Activated T-helper 1 cell treated with anti-CD3 and anti-CD28 coated beads, Interleukin-12 subunit alpha, Interleukin-12 subunit beta, Interleukin-2, Interleukin-4 antibody, amounts not matched to agents 30 ng/mL and 10 ng/mL and 1 ng/mL, durations not matched to agents 14 hours and 24 hours and 36 hours (primary cell): ENCODE measurements at regions of chr18 and their contacts with region 1.

Region 1: GRCh38 chr18:59358712-59359575 is at the start of gene LMAN1:
- DNase-seq: peak; percentile 92
- H3K4me3 Mint-ChIP-seq: peak within 1 kb of the TSS; percentile 99
- H3K27ac Mint-ChIP-seq: peak within 1 kb of the TSS; percentile 100
- H3K4me1 Mint-ChIP-seq: peaks cover 27% of the 10 kb centered on the region
- H3K27me3 Mint-ChIP-seq: no peaks in the 10 kb centered on the region
- total RNA-seq, gene LMAN1: 147 and 175 TPM in 2 replicates

Region 2: DNA sequence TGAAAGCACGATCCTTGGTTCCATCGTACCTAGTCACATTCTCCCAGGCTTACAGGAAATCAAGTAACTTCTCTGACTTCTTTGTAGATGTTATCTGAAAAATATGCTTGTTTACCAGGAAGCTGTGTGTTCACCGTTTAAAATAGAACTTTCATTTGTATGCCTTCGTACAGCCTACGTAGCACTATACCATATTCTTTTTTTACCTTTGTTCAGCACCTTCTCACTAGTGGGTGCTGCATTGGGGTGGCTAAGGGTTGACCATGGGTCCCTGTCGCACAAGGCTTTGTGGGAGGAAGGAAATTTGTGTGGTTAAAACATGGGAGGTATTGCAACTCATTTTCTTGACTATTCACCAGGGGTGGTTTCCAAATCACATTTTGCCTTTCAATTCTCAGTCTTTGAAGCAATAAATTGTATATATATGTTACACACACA is 671.1 kb before region 1 on chr18:
- intact Hi-C with region 1: loop called (anchors 5 kb)
- DNase-seq: peak; percentile 68
- H3K4me3 Mint-ChIP-seq: peak overlapping the region; percentile 53
- H3K27ac Mint-ChIP-seq: peak overlapping the region; percentile 83
- H3K4me1 Mint-ChIP-seq: peaks cover 60% of the 10 kb centered on the region
- H3K27me3 Mint-ChIP-seq: no peaks in the 10 kb centered on the region

Region 3: DNA sequence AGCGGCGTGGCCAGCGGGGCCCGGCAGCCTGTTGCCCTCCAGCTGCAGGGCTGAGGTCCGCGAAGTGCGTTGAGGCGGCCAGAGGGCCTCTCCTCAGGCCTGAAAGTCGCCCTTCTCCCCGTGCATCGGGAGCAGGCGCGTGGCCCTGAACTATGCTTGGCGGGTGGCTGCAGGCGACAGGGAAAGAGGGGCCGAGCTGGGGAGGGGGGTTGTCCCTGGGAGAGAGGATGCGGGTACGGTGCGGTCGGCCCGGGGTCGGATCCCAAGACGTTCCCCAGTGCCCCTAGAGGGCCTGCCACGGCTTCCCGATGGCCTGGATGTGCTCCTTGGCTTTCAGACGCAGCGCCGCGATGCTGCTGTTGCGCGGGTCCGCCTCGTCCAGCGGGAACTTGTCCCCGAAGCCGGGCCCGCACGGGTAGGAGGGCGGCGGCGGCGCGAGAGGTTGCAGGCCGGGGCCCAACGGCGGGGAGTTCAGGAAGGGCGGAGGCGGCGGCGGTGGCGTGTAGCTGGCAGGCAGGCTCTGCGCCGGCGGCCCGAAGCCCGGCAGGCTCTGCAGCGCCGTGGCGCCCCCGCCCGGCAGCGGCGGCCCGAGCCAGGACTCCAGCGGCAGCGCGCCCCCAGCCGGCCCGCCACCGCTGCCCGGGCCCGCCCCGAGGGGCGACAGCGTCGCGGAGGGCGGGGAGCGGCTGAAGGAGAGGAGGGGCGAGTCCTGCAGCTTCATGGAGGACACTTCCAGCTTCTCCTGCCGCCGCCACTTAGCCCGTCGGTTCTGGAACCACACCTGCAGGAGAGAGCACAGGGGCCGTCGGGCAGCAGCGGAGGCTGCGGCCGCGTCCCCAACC is 90.0 kb before region 1 on chr18:
- intact Hi-C with region 1: loop called (anchors 2 kb)
- DNase-seq: peak; percentile 14
- H3K4me3 Mint-ChIP-seq: peak overlapping the region; percentile 49
- H3K27ac Mint-ChIP-seq: no peak overlapping the region
- H3K4me1 Mint-ChIP-seq: peaks cover 13% of the 10 kb centered on the region
- H3K27me3 Mint-ChIP-seq: peaks cover 74% of the 10 kb centered on the region

Region 4: GRCh38 chr18:59340817-59341216 is 18.1 kb before region 1 on chr18:
- intact Hi-C with region 1: loop called (anchors 1 kb)
- DNase-seq: no peak
- H3K4me3 Mint-ChIP-seq: peak overlapping the region; percentile 56
- H3K27ac Mint-ChIP-seq: peak overlapping the region; percentile 80
- H3K4me1 Mint-ChIP-seq: peaks cover 60% of the 10 kb centered on the region
- H3K27me3 Mint-ChIP-seq: no peaks in the 10 kb centered on the region

Region 5: GRCh38 chr18:59484837-59485328 is 125.9 kb after region 1 on chr18:
- intact Hi-C with region 1: no loop called
- DNase-seq: no peak
- H3K4me3 Mint-ChIP-seq: no peak overlapping the region
- H3K27ac Mint-ChIP-seq: no peak overlapping the region
- H3K4me1 Mint-ChIP-seq: no peaks in the 10 kb centered on the region
- H3K27me3 Mint-ChIP-seq: peaks cover 4% of the 10 kb centered on the region

Region 6: DNA sequence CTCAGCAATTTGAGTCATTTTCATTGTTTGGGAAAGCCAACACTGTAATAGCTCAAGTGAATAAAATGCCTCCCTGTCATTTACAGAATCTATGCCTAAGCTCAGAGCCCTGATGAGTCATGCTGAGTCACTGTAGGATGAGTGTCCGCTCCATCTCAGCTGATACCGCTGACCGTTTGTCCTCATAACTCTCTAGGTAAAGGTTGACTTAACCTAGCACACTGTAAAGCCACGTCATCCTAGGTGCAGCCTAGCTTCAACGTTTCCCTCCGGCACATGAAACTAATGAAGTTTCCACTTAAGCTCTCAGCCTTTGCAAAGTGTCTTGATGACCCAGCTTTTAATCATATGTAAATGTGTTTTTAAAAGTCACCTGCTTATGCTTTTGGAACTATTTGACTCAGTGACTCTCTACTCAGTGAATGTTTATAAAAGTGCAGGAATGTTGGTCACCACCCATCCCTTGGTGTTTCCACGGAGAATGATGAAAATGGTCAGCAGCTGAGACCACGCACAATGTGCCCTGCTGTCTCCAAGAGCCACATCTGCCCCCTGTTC is 694.9 kb after region 1 on chr18:
- intact Hi-C with region 1: no loop called
- DNase-seq: no peak
- H3K4me3 Mint-ChIP-seq: no peak overlapping the region
- H3K27ac Mint-ChIP-seq: no peak overlapping the region
- H3K4me1 Mint-ChIP-seq: no peaks in the 10 kb centered on the region
- H3K27me3 Mint-ChIP-seq: peaks cover 8% of the 10 kb centered on the region